ENCODE measurements at regions of chr4 and their contacts with region 1.

Region 1: DNA sequence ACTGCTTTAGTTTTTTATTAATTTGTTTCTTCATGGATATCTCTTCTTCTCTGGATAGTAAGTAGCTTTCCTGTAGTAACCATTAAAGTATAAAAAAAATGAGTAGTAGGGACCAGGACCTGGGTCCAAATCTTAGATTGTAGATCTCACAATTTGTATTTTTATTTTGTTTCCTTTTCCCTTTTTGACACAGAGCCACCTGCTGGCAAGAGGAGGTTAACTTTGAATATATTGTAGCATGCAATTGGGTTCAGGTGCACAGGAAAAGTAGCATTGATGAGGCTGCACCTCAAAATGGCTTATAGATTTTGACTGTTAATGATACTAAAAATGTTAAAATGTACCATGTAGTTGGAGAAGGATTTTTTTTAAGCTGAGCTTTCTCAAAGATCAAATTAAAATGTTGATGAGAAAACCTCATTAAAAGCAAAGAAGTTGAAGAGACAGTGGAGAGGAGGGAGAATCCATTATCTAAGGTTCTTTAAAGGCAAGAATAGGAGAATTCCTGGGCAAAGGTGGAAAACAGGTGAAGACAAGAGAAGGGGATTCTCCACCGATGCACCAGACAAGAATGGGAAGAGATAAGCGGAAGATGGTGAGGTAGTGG is 48.3 kb upstream of the HPGDS start:
- DNase-seq: no peak
- ATAC-seq: no peak
- H3K4me3 ChIP-seq: no peak overlapping the region
- H3K27ac ChIP-seq: no peak overlapping the region
- H3K4me1 ChIP-seq: no peaks in the 10 kb centered on the region
- H3K27me3 ChIP-seq: no peaks in the 10 kb centered on the region
- CTCF ChIP-seq: peak in 2 of 5 experiments; percentile 31 to 34
- POLR2A ChIP-seq: no peak

Region 2: DNA sequence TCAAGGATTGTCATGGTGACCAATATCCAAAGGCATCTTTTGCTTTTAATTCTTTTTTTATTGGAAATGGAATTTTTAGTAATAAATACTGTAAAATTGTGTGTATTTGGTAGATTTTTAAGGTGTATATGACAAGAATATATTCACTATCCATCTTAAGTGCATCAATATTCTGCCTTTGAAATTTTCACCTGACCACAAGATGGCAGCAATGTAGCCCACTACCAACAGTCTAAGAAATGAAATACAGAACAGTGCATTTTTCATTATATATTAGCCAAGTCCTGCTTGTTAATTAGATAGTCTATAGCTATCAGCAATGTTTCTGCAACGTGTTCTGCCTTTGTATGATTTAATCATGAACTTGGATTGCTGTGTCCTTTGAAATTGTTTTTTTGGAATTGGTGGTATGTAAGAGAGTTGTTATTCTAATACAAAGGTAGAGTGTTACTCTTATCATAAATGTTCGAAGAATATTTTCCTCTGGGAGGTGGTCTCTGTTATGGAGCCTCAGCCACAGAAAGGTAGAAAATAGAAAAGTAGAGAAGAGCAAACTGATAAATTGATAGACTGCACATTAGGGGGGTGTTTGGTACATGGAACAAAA is 86.4 kb before region 1 on chr4:
- in situ Hi-C with region 1: no loop called
- intact Hi-C with region 1: loop called (anchors 5 kb)
- DNase-seq: no peak
- ATAC-seq: no peak
- H3K4me3 ChIP-seq: no peak overlapping the region
- H3K27ac ChIP-seq: no peak overlapping the region
- H3K4me1 ChIP-seq: no peaks in the 10 kb centered on the region
- H3K27me3 ChIP-seq: no peaks in the 10 kb centered on the region
- CTCF ChIP-seq: peak in 3 of 5 experiments; percentile 33 to 59 (median 51)
- POLR2A ChIP-seq: no peak

Region 3: DNA sequence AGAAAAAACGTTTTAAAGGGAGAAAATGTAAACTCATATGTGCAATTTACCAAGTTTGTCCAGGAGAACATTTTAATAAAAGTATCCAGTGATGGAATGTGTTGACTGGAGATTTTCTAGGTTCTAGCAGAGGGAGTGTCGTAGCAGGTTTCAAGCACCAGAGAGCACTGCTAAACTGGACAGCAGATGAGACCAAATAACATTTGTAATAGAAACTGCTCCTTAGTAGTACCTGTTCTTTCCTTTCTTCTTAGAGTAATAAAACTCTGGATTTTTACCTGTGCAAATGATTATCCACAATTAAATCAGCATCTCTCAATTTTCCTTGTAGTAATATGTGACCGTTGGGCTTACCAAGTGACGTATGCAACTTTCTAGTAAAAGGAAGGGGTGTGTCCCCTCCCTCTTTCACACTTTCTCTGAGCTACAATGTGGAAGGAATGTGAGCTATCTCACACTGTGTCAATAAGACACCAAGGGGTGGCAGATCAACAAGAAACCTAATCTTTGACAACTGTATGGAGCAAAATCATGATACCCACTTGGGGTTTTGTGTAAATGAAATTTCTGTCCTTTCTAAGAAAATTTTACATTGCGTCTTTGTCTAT is 57.8 kb before region 1 on chr4:
- in situ Hi-C with region 1: no loop called
- intact Hi-C with region 1: loop called (anchors 10 kb)
- DNase-seq: no peak
- ATAC-seq: peak; percentile 65 to 68
- H3K4me3 ChIP-seq: no peak overlapping the region
- H3K27ac ChIP-seq: no peak overlapping the region
- H3K4me1 ChIP-seq: peaks cover 0 to 10% of the 10 kb centered on the region in 2 donors
- H3K27me3 ChIP-seq: no peaks in the 10 kb centered on the region
- CTCF ChIP-seq: peak in 4 of 5 experiments; percentile 12 to 47 (median 36)
- POLR2A ChIP-seq: no peak

Region 4: GRCh38 chr4:95095348-95095974 is 704.6 kb after region 1 on chr4:
- in situ Hi-C with region 1: loop called in 1 of 4 experiments (anchors 25 kb)
- intact Hi-C with region 1: no loop called
- DNase-seq: no peak
- ATAC-seq: peak; percentile 65 to 77
- H3K4me3 ChIP-seq: no peak overlapping the region
- H3K27ac ChIP-seq: no peak overlapping the region
- H3K4me1 ChIP-seq: peaks cover 0 to 6% of the 10 kb centered on the region in 2 donors
- H3K27me3 ChIP-seq: no peaks in the 10 kb centered on the region
- CTCF ChIP-seq: peak; percentile 21 to 66 (median 46)
- POLR2A ChIP-seq: no peak

Measured in gastrocnemius medialis (tissue), 4 donors.